Activated T-helper 1 cell treated with anti-CD3 and anti-CD28 coated beads, Interleukin-12 subunit alpha, Interleukin-12 subunit beta, Interleukin-2, Interleukin-4 antibody, amounts not matched to agents 30 ng/mL and 10 ng/mL and 1 ng/mL, durations not matched to agents 14 hours and 24 hours and 36 hours (primary cell): ENCODE measurements at regions of chr2 and their contacts with region 1.

Region 1: DNA sequence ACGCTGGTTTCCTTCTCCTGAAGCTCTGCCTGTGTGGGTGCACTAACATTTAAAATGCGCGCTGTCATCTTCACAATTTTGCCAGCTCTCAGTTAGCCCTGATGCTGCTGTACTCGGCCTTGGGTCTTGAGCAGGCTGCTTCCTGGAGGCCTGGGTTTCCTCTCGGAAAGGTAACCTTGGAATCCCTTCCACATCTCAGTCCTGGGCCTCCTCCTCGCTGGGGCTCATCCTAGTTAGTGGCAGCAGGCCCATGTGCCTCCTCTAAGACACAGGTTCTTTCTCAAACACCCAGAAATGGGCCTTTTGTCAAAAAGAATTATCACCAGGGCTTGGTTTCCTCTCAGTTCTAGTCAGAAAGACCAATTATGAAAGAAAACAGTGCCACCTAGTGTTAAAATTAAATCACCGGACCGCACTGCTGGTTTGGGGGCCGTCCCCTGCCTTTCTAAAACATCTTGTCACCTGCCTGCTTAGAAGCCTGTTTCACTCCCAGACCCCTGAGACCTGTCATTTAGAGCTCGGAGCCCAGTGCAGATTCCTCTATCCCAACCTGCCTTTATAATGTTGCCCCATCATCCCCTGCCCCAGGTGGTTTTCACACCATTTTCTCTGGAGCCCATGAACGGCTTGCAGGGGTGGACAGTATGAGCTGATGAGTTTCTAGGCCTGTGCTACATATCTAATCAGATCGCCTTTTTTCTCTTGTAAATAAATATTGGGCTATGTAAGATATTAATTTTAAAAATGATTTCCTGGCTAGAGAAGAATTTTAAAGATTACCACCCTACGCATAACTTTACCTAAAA is 42.4 kb downstream of the HK2 start:
- DNase-seq: peak; percentile 21
- H3K4me3 Mint-ChIP-seq: no peak overlapping the region
- H3K27ac Mint-ChIP-seq: peak overlapping the region; percentile 40
- H3K4me1 Mint-ChIP-seq: peaks cover 7% of the 10 kb centered on the region
- H3K27me3 Mint-ChIP-seq: no peaks in the 10 kb centered on the region

Region 2: DNA sequence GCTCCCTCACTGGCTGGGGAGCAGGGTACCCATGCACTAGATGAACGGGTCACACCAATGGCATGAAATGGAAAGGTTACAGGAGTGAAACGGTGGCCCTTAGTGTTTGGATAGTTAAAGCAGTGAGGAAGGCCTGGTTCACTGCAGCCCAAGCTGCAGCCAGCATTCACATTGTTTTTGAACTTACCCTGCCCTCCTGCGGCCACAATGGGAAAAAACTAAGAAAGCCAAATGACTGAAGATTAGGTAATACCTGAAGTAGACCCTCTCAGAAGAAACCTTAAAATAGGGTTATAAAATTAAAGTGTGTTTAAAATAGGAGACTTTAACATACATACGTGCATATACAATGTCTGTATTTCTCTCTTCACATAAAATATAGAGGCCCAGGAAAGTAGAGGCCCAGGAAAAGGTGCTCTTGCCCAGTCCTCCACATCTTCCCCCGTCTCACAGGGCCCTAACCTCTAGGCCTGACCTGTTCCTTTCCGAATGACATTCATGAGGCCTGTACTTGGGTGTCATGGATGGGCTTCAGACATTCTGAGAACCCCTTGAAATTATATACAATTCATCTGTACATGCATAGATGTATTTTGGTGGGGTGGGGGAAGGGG is 288.5 kb before region 1 on chr2:
- intact Hi-C with region 1: no loop called
- DNase-seq: peak; percentile 56
- H3K4me3 Mint-ChIP-seq: no peak overlapping the region
- H3K27ac Mint-ChIP-seq: peak overlapping the region; percentile 12
- H3K4me1 Mint-ChIP-seq: peaks cover 37% of the 10 kb centered on the region
- H3K27me3 Mint-ChIP-seq: peaks cover 17% of the 10 kb centered on the region

Region 3: DNA sequence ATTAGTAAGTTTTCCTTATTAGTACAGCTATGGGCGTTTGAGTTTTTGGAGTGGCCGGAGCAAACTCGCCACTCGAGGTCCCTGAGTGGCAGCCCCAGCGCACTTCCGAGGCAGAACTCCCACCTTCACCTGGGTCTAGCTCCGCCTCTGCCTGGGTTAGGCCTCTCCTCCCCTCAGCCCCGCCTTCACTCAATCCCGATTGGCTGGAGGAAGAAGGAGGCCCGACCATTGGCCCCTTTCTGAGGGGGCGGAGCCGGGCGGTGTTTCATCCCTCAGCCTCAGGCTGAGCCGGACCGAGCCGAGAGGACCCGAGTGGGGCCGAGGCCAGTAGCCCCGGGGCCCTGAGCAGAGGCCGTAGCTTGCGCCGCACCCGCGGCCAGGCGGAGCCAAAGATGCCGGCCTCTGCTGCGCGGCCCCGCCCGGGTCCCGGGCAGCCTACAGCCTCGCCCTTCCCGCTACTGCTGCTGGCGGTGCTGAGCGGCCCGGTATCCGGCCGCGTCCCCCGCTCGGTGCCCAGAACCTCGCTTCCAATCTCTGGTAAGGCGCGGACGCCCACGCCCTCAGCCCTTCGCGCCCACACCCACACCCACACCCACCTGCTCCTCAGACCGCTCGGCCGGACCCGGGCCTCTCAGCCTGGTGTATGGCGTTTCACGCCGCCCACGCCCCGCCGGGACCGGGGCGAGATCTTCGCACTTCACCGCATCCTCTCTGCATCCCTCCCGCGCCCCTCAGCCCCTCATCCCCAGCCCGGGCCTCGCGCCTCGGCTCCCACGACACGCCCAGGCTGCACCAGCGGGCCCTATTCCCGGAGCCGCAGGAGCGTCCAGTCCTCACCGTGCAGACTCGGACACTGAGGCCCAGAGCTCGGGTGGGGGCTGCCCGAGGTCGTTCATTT is 222.1 kb before region 1 on chr2 and contains the start of gene SEMA4F:
- intact Hi-C with region 1: no loop called
- DNase-seq: peak; percentile 92
- H3K4me3 Mint-ChIP-seq: peak within 1 kb of the TSS; percentile 89
- H3K27ac Mint-ChIP-seq: peak within 1 kb of the TSS; percentile 4
- H3K4me1 Mint-ChIP-seq: peaks cover 12% of the 10 kb centered on the region
- H3K27me3 Mint-ChIP-seq: peaks cover 37% of the 10 kb centered on the region
- total RNA-seq, gene SEMA4F: 2.4 and 3.2 TPM in 2 replicates

Region 4: DNA sequence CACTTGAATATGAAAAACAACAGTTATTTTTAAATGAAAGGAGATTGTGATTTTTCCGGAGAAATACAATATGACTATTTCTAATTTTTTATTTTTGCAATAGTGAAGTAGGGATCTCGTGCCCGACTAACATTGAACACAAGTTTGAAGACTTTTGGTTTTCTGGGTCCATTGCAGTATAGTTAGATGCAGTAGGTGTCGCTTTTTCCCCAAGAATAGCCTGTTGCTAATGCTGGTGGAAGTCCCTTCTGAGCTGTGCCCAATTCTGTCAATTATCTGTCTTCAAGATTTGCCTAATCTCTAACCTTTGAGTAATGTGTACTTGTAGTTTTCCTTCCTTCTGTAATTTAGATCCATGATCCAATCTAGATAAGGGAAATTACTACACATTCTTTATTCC is 185.7 kb before region 1 on chr2:
- intact Hi-C with region 1: loop called (anchors 1 kb)
- DNase-seq: no peak
- H3K4me3 Mint-ChIP-seq: no peak overlapping the region
- H3K27ac Mint-ChIP-seq: no peak overlapping the region
- H3K4me1 Mint-ChIP-seq: no peaks in the 10 kb centered on the region
- H3K27me3 Mint-ChIP-seq: peaks cover 13% of the 10 kb centered on the region

Region 5: GRCh38 chr2:74715078-74715791 is 161.0 kb before region 1 on chr2:
- intact Hi-C with region 1: loop called (anchors 1 kb)
- DNase-seq: peak; percentile 75
- H3K4me3 Mint-ChIP-seq: peak overlapping the region; percentile 83
- H3K27ac Mint-ChIP-seq: no peak overlapping the region
- H3K4me1 Mint-ChIP-seq: peaks cover 9% of the 10 kb centered on the region
- H3K27me3 Mint-ChIP-seq: peaks cover 12% of the 10 kb centered on the region